Activated T-helper 1 cell treated with anti-CD3 and anti-CD28 coated beads, Interleukin-12 subunit alpha, Interleukin-12 subunit beta, Interleukin-2, Interleukin-4 antibody, amounts not matched to agents 30 ng/mL and 10 ng/mL and 1 ng/mL, durations not matched to agents 14 hours and 24 hours and 36 hours (primary cell): ENCODE measurements at regions of chr20 and their contacts with region 1.

Region 1: DNA sequence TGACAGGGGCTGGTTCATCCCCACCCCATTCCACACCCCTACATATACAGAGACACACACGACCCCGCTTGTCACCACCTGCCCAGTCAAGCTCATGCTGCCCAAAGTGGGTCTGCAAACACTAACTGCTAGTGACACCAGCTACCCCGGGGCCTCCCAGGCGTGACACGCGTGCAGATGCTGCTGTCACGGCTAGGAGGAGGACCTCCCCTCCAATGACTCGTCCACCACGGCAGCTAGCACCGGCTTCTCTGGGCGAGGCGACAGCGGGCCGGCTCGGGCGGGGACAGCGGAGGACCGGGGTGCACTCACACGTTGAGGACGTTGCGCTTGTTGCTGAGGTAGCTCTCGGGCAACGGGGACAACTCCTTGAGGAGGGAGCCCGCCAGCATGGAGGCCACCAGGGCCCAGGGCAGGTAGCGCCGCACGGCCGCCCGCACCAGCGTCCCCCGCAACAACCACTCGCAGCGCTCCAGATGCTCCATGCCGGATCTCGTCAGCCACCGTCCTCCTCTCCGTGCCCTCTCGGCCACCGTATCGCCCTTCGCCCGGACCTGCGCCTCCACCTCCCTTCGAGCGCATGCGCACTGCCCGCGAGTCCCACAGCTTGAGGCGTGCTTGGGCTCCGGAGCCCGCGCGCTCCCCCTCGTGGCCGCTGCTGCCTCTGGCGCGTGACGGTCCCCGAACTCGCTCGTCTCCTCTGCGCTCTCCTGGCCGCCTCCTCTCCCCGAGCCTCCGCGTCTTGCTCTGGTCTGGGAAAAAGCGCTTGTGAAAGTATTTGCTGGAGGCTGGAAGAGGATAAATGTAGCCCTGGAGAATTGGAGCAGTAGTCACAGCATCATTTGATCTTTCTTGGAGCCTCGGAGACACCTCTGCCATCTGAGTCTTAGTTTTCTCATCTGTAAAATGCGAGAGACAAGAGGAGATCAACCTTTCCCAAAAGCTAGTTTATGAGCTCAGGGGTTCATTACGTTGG is at the start of gene FITM2:
- DNase-seq: peak; percentile 97
- H3K4me3 Mint-ChIP-seq: peak within 1 kb of the TSS; percentile 86
- H3K27ac Mint-ChIP-seq: peak within 1 kb of the TSS; percentile 87
- H3K4me1 Mint-ChIP-seq: peaks cover 18% of the 10 kb centered on the region
- H3K27me3 Mint-ChIP-seq: peaks cover 4% of the 10 kb centered on the region
- total RNA-seq, gene FITM2: 2.2 TPM in 2 replicates

Region 2: GRCh38 chr20:43456809-43457639 is 853.9 kb before region 1 on chr20:
- intact Hi-C with region 1: loop called (anchors 2 kb)
- DNase-seq: peak; percentile 83
- H3K4me3 Mint-ChIP-seq: peak overlapping the region; percentile 88
- H3K27ac Mint-ChIP-seq: peak overlapping the region; percentile 100
- H3K4me1 Mint-ChIP-seq: peaks cover 34% of the 10 kb centered on the region
- H3K27me3 Mint-ChIP-seq: peaks cover 17% of the 10 kb centered on the region

Region 3: GRCh38 chr20:44115762-44116644 is 194.9 kb before region 1 on chr20:
- intact Hi-C with region 1: loop called (anchors 1 kb)
- DNase-seq: no peak
- H3K4me3 Mint-ChIP-seq: no peak overlapping the region
- H3K27ac Mint-ChIP-seq: no peak overlapping the region
- H3K4me1 Mint-ChIP-seq: peaks cover 6% of the 10 kb centered on the region
- H3K27me3 Mint-ChIP-seq: peaks cover 24% of the 10 kb centered on the region

Region 4: DNA sequence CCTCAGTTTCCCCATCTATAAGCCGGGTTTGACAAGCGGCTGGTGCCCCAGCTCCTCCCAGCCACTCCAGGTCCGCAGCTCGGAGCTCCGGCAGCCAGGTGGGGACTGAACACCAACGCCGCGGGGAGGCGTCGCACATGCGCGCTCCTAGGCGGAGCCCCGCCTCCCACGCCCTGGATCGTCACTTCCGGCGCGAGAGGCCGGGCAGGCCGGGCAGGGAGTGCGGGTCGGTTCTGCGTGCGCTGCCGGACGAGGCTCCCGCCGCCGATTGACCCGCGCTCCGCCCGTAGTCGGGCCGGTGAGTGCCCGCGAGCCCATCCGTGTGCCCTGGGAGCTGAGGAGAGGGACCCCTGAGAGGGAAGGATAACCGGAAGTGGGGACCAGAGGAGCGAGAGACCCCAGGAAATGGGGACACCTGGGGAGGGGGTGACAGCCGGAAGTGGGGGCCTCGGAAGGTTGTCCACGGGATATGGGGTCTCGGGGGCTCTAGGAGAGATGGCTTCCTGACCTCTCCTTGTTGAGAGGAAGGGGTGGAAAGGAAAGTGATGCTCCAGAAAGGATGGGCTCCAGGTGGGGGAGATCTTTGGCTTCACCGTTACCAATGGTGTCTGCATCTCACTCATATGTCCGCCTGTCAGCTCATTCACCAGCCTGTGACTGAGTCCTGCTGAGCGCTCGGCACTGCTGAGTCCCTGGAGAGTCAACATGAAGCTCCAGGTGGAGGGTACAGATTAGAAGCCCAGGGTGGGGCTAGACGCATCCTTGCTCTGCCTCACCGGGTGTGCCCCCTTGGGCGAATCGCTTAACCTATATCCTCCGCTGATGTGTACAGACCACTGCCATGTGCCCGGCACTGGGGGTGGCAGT is 165.0 kb after region 1 on chr20 and contains the start of gene TTPAL:
- intact Hi-C with region 1: loop called (anchors 2 kb)
- DNase-seq: peak; percentile 90
- H3K4me3 Mint-ChIP-seq: peak within 1 kb of the TSS; percentile 95
- H3K27ac Mint-ChIP-seq: peak within 1 kb of the TSS; percentile 93
- H3K4me1 Mint-ChIP-seq: peaks cover 20% of the 10 kb centered on the region
- H3K27me3 Mint-ChIP-seq: peaks cover 3% of the 10 kb centered on the region
- total RNA-seq, gene TTPAL: 22.9 and 24.7 TPM in 2 replicates

Region 5: GRCh38 chr20:44516491-44516890 is 205.5 kb after region 1 on chr20:
- intact Hi-C with region 1: no loop called
- DNase-seq: no peak
- H3K4me3 Mint-ChIP-seq: no peak overlapping the region
- H3K27ac Mint-ChIP-seq: no peak overlapping the region
- H3K4me1 Mint-ChIP-seq: peaks cover 30% of the 10 kb centered on the region
- H3K27me3 Mint-ChIP-seq: no peaks in the 10 kb centered on the region